HepG2 (cell line): ENCODE measurements at regions of chr1 and their contacts with region 1.

Region 1: DNA sequence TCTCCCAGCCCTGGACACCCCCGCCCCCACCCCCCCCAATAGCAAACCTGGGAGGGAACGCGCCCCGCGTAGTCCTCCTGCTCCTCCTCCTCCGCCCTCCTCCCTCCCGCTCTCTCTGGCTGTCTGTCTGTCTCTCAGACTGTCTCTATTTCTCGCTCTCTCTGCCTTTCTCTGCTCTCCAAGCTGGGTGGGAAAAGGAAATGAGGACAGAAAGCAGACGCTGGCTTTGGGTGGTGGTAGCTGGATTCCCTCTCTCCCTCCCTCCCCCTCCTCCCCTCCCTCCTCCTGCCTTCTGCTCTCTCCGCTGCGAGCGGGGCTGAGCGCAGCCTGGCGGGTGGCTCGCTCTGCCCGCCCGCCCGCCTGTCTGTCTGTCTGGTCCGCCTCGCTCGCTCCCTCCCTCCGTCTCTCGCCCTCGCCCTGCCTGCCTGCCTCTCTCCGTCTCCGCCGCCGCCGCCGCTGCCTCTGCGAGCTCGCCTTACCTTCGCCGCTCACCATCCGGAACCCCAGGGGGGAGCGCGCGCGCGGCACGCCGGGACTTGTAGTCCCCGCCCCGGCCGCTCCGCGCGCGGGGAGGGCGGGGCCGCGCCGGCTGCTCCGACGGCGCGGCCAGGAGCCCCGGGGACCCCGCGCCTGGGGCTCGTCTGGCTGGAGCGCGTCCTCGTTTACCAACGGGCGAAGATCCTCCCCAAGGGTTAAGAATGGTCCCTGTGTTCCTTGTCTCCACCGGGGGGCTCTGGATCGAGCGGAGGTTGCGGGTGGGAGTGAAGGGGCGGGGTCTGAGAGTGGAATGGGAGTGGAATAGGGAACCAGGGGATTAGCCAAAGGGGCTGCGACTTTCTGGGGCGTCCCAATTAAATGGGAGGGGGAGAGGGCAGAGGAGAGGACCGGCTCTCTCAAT is at the start of gene AHDC1:
- DNase-seq: peak; percentile 74
- ATAC-seq: peak; percentile 52
- H3K4me3 ChIP-seq: peak within 1 kb of the TSS; percentile 66 to 86 (median 83)
- H3K27ac ChIP-seq: peak within 1 kb of the TSS; percentile 47
- H3K4me1 ChIP-seq: peaks cover 80% of the 10 kb centered on the region
- H3K27me3 ChIP-seq: no peaks in the 10 kb centered on the region; a peak in 1 of 5 replicates
- CTCF ChIP-seq: peak; percentile 38
- EP300 ChIP-seq: no peak
- POLR2A ChIP-seq: no peak
- RAD21 ChIP-seq: peak; percentile 45; the same call in 1 of the 2 replicates
- total RNA-seq, gene AHDC1: 2.6 and 2.7 TPM in 2 replicates

Region 2: DNA sequence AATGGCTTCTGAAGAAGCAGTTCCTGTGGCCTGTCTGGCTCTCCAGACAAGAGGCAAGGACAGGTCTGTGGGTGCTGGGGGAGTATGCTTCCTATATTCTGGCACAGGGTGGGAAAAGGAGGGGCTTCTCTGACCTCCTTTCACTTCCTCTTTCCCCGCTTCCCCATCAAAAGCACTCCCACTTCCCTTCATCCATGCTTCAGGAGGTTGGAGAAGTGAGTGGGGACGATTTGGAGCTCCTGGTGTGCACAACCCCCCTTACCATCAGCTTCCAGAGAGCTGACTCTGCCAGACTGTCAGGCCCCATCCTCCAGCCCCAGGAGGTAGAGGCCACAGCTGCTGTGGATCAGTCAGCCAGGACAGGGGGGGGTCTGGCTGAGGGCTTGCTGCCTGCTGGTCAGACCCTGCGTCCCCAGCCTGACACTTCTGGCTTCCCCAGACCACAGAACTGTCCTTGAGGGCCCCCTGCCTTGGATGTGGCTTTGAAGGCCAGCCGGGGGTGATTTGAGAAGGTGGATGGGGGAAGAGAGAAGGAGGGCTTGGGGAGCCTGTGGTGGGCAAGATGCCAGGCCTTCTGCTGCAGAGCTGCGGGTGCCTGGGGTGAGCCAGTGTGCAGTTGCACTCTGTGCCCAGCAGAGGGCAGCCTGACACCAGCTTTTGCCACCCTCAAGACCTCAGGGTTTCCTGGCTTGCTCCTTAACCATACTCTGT is 303.4 kb before region 1 on chr1:
- CTCF ChIA-PET with region 1: no interaction called
- POLR2A ChIA-PET with region 1: no interaction called
- in situ Hi-C with region 1: loop called (anchors 10 kb)
- intact Hi-C with region 1: no loop called
- DNase-seq: peak; percentile 61
- ATAC-seq: peak; percentile 86
- H3K4me3 ChIP-seq: no peak overlapping the region
- H3K27ac ChIP-seq: no peak overlapping the region
- H3K4me1 ChIP-seq: no peaks in the 10 kb centered on the region
- H3K27me3 ChIP-seq: no peaks in the 10 kb centered on the region
- CTCF ChIP-seq: peak; percentile 98
- EP300 ChIP-seq: no peak
- POLR2A ChIP-seq: no peak
- RAD21 ChIP-seq: peak; percentile 93

Region 3: GRCh38 chr1:27416387-27417111 is 187.4 kb before region 1 on chr1:
- CTCF ChIA-PET with region 1: interaction called, 31 read pairs
- POLR2A ChIA-PET with region 1: interaction called, 3 read pairs
- in situ Hi-C with region 1: no loop called
- intact Hi-C with region 1: loop called (anchors 1 kb)
- DNase-seq: peak; percentile 44
- ATAC-seq: peak; percentile 68
- H3K4me3 ChIP-seq: no peak overlapping the region
- H3K27ac ChIP-seq: no peak overlapping the region
- H3K4me1 ChIP-seq: no peaks in the 10 kb centered on the region
- H3K27me3 ChIP-seq: no peaks in the 10 kb centered on the region
- CTCF ChIP-seq: peak; percentile 61
- EP300 ChIP-seq: no peak
- POLR2A ChIP-seq: no peak
- RAD21 ChIP-seq: peak; percentile 39; the same call in 1 of the 2 replicates

Region 4: GRCh38 chr1:27504588-27505419 is 99.1 kb before region 1 on chr1:
- CTCF ChIA-PET with region 1: no interaction called
- POLR2A ChIA-PET with region 1: interaction called, 5 read pairs
- in situ Hi-C with region 1: no loop called
- intact Hi-C with region 1: loop called (anchors 5 kb)
- DNase-seq: peak; percentile 92
- ATAC-seq: peak; percentile 87
- H3K4me3 ChIP-seq: peak overlapping the region; percentile 62 to 77 (median 71)
- H3K27ac ChIP-seq: peak overlapping the region; percentile 99
- H3K4me1 ChIP-seq: peaks cover 54% of the 10 kb centered on the region
- H3K27me3 ChIP-seq: no peaks in the 10 kb centered on the region
- CTCF ChIP-seq: peak; percentile 29; the same call in 1 of the 2 replicates
- EP300 ChIP-seq: peak; percentile 47 to 71; a peak in 3 of 4 replicates
- POLR2A ChIP-seq: peak in 1 of 2 experiments; percentile 38; a peak in 1 of 4 replicates
- RAD21 ChIP-seq: 0 out of 2 replicates have a peak, but pooled peaks have one; percentile 15

Region 5: DNA sequence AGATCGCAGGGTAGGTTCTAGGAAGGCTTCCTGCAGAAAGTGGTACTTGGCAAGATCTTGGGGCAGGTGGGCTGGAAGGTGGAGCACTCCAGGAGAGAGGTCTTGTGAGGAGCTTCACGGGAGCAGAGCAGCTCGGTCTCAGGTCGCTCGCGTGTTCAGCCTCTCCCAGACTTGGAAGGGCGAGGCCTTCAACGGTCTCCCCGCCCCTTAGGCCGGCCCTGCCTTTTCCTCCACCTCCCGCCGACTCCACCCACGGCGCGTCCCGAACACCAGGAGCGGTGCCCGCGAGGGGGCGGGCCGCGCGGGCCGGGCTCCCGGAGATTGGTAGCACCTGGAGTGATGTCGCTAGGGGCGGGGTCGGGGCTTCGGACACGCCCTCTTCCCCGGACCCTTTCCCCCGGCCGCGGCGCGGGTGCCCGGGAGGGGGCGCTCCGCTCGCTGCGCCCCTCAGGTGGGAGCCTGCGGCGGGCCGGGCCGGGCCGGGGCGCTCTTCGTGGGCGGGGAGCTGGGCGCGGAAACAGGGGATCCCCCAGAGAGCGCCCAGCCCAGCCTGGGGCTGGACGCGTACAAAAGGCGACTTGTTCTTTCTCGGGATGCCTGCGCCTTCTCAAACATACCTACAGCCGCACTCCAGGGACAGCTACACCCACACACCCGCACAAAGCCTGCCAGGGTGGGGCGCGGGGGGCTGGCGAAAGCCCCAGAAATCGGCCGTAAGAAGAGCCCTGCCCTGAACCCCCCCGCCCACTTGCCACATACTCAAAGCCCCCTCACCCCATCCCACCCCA is 35.4 kb before region 1 on chr1:
- CTCF ChIA-PET with region 1: interaction called, 7 read pairs
- POLR2A ChIA-PET with region 1: interaction called, 38 read pairs
- in situ Hi-C with region 1: no loop called
- intact Hi-C with region 1: loop called (anchors 5 kb)
- DNase-seq: peak; percentile 93
- ATAC-seq: peak; percentile 67
- H3K4me3 ChIP-seq: peak overlapping the region; percentile 47 to 66 (median 54)
- H3K27ac ChIP-seq: peak overlapping the region; percentile 67
- H3K4me1 ChIP-seq: peaks cover 96% of the 10 kb centered on the region
- H3K27me3 ChIP-seq: no peaks in the 10 kb centered on the region
- CTCF ChIP-seq: peak; percentile 78
- EP300 ChIP-seq: no peak
- POLR2A ChIP-seq: peak in 1 of 2 experiments; percentile 51; a peak in 2 of 4 replicates
- RAD21 ChIP-seq: peak; percentile 87

Region 6: GRCh38 chr1:27662707-27663393 is 58.9 kb after region 1 on chr1:
- CTCF ChIA-PET with region 1: interaction called, 63 read pairs
- POLR2A ChIA-PET with region 1: interaction called, 12 read pairs
- in situ Hi-C with region 1: no loop called
- intact Hi-C with region 1: loop called (anchors 1 kb)
- DNase-seq: peak; percentile 73
- ATAC-seq: peak; percentile 83
- H3K4me3 ChIP-seq: peak overlapping the region in 2 of 3 experiments; percentile 7 to 35; a peak in 1 of 6 replicates
- H3K27ac ChIP-seq: no peak overlapping the region
- H3K4me1 ChIP-seq: peaks cover 32% of the 10 kb centered on the region
- H3K27me3 ChIP-seq: peaks cover 1 to 6% of the 10 kb centered on the region in 2 experiments; a peak in 1 of 5 replicates
- CTCF ChIP-seq: peak; percentile 88
- EP300 ChIP-seq: no peak
- POLR2A ChIP-seq: no peak
- RAD21 ChIP-seq: peak; percentile 93